ENCODE measurements at regions of chr7 and their contacts with region 1.

Region 1: GRCh38 chr7:1159891-1160668 is at the start of gene ZFAND2A:
- DNase-seq: peak; percentile 99
- ATAC-seq: peak; percentile 98 to 100 (median 99)
- H3K4me3 ChIP-seq: peak within 1 kb of the TSS; percentile 58 to 100 (median 91)
- H3K27ac ChIP-seq: peak within 1 kb of the TSS; percentile 85 to 100 (median 98)
- H3K4me1 ChIP-seq: peaks cover 7 to 28% (median 22%) of the 10 kb centered on the region in 9 donors
- H3K27me3 ChIP-seq: no peaks in the 10 kb centered on the region
- CTCF ChIP-seq: peak in 1 of 9 donors; percentile 3
- total RNA-seq, gene ZFAND2A: 4.4 to 11.2 (median 7.7) TPM

Region 2: GRCh38 chr7:985915-986741 is 174.0 kb before region 1 on chr7:
- intact Hi-C with region 1: loop called in 2 of 10 experiments (anchors 10 kb)
- DNase-seq: no peak
- ATAC-seq: peak in 1 of 8 donors; percentile 8
- H3K4me3 ChIP-seq: no peak overlapping the region
- H3K27ac ChIP-seq: no peak overlapping the region
- H3K4me1 ChIP-seq: peaks cover 0 to 13% (median 6%) of the 10 kb centered on the region in 9 donors
- H3K27me3 ChIP-seq: peaks cover 11 to 63% (median 55%) of the 10 kb centered on the region in 7 donors
- CTCF ChIP-seq: no peak

Region 3: GRCh38 chr7:1076181-1077072 is 83.7 kb before region 1 on chr7:
- intact Hi-C with region 1: no loop called
- DNase-seq: peak; percentile 47 to 55
- ATAC-seq: peak; percentile 66 to 86 (median 79)
- H3K4me3 ChIP-seq: peak overlapping the region in 8 of 10 donors; percentile 1 to 39 (median 29)
- H3K27ac ChIP-seq: peak overlapping the region in 9 of 10 donors; percentile 4 to 81 (median 46)
- H3K4me1 ChIP-seq: peaks cover 0 to 24% (median 12%) of the 10 kb centered on the region in 9 donors
- H3K27me3 ChIP-seq: no peaks in the 10 kb centered on the region
- CTCF ChIP-seq: peak in 3 of 9 donors; percentile 7 to 17 (median 13)

Region 4: DNA sequence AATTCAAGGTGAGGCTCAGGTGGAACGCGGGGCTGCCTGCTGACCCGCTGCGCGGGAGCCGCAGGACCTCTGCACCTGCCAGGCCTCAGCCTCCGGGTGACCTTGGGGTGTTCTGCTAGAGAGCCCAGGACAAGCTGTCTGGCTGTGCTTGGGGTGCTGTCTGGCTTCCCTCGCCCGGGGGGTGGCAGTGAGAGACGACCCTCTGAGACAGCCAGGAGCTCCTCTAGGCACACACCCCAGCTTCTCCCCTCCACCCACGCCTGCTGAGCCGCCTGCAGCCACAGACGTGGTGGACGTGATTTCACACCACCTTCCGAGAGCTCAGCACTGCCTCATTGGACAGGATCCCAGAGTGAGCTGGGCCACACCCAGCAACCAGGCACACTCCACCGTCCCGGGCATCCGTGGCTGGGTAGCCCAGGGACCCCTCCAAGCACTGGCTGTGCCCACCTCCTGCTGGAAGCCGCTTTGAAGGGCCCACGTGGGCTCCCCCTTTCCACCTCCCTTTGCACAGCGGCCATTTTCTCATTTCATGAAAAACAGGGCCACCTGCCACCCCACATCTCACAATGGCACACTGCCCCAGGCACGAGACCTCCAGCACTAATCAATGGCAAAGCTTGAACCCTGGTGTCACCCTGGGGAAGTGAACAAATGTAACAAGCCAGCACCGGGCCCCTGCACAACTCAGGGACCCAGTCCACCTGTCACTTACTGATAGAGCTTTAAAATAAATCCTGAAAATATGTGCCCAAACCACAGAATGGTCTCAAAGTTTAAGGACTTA is 35.1 kb before region 1 on chr7:
- intact Hi-C with region 1: no loop called
- DNase-seq: no peak
- ATAC-seq: peak in 5 of 8 donors; percentile 2 to 45 (median 15)
- H3K4me3 ChIP-seq: peak overlapping the region in 8 of 10 donors; percentile 11 to 51 (median 36)
- H3K27ac ChIP-seq: peak overlapping the region in 7 of 10 donors; percentile 15 to 79 (median 51)
- H3K4me1 ChIP-seq: peaks cover 0 to 38% (median 15%) of the 10 kb centered on the region in 9 donors
- H3K27me3 ChIP-seq: no peaks in the 10 kb centered on the region
- CTCF ChIP-seq: no peak

Region 5: DNA sequence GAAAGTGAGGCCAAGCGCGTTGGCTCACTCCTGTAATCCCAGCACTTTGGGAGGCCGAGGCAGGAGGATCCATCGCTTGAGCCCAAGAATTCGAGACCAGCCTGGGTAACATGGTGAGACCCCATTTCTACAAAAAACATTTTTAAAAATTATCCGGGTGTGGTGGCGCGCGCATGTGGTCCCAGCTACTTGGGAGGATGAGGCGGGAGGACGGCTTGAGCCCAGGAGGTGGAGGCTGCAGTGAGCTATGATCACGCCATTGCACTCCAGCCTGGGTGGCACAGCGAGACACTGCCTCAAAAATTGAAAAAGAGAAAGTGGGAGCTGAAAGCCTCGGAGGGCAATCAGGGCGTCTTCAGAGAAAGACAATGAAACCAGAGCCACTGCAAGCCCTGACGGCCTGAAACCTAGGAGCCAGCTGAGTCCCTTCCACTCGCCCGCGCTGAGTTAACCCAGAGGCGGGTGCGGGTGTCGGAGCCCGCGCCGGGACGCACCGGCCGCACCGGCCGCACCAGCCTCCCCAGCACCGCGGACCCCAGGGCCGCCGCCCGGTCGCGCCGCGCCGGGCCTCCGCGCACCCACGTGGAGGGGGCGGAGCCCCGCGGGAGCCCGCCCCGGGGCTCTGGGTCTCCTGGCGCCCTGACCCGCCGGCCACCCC is 22.4 kb before region 1 on chr7:
- intact Hi-C with region 1: loop called in 1 of 10 experiments (anchors 1 kb)
- DNase-seq: no peak
- ATAC-seq: peak; percentile 53 to 89 (median 78)
- H3K4me3 ChIP-seq: peak overlapping the region; percentile 58 to 95 (median 74)
- H3K27ac ChIP-seq: peak overlapping the region in 9 of 10 donors; percentile 66 to 87 (median 75)
- H3K4me1 ChIP-seq: peaks cover 0 to 20% (median 16%) of the 10 kb centered on the region in 9 donors
- H3K27me3 ChIP-seq: no peaks in the 10 kb centered on the region
- CTCF ChIP-seq: no peak

Region 6: DNA sequence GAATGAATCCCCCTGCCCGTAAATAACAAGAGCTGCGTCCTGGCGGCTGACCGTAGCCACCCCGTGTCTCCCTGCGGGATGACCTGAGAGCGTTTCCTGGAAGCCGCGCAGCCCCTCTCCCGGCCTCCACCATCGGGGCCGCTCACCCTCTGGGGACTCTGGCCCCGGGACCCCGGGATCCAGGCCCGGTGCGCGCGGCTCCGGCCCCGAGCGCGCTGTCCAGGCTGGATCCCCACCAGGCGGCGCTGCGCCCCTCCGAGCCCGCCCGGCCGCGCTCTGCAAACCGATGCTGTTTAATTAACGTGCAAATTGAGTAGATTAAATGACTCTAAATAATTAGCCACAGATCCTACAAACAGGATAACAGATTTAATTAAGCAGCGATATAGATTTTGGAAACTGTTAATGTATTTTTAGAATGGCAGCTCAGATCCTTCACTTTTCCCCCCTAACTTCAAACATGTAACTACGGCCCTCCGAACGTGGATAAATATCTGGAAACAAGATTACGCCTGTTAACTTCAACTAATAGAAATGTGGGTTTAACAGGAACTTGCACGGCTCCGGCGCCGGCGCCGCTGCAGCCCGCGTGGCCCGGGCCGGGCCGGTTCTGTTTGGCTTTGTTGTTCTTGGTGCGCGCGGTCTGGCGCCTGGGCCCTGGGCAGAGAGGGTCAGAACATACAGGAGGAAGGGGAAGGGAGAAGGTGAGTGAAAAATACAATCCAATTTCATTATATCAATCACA is 65.5 kb after region 1 on chr7:
- intact Hi-C with region 1: no loop called
- DNase-seq: no peak
- ATAC-seq: peak in 6 of 8 donors; percentile 45 to 74 (median 60)
- H3K4me3 ChIP-seq: no peak overlapping the region
- H3K27ac ChIP-seq: no peak overlapping the region
- H3K4me1 ChIP-seq: peaks cover 0 to 26% (median 13%) of the 10 kb centered on the region in 9 donors
- H3K27me3 ChIP-seq: peaks cover 62 to 100% (median 97%) of the 10 kb centered on the region in 7 donors
- CTCF ChIP-seq: peak; percentile 55 to 91 (median 81)

Measured in heart right ventricle (tissue), 16 donors.